HAP-1 (cell line): ENCODE measurements at regions of chr6 and their contacts with region 1.

Region 1: DNA sequence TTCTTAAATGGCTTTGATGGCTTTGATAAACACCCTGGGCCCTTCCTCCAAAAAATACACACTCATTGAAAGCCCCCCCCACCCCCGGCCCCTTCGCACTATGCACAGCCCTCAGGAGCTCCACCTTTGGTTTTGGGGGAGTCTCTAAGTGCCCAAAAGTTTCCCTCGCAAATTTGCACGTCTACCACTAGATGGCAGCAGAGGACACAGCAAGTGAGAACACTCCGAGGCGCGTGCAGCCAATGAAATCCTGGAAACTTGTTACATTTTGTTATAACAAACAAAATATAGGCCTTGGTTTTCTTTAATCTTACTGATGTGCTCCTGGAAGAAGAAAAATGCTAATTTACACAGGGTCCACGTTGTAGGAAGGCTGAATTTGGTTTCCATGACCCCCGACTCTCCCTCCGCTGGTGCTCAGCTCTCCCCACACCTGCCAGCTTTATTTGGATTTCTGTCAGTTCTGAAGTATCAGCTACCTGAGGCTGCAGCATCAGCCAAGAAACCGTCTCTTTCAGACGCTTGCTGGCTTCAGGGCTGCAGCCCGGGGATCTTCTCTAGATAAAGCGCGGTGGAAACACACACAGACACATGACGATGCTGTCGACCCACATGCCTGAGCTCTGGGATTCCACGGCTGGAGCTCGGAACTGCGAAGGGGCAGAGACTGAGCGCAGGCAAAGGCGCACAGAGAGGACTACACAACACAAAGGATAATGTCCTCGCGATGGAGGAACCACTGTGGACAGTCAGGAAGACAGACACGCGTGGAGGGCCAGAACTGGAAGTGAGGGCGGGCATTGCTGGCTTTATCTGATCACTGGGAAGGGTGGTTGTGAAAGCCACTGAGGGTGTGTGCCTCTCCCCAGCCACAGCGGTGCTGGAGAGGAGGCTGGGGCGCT is 148.4 kb upstream of the RPS6KA2 start:
- DNase-seq: peak; percentile 43 to 73
- H3K4me3 ChIP-seq: no peak overlapping the region
- H3K4me1 ChIP-seq: no peaks in the 10 kb centered on the region
- H3K27me3 ChIP-seq: no peaks in the 10 kb centered on the region

Region 2: DNA sequence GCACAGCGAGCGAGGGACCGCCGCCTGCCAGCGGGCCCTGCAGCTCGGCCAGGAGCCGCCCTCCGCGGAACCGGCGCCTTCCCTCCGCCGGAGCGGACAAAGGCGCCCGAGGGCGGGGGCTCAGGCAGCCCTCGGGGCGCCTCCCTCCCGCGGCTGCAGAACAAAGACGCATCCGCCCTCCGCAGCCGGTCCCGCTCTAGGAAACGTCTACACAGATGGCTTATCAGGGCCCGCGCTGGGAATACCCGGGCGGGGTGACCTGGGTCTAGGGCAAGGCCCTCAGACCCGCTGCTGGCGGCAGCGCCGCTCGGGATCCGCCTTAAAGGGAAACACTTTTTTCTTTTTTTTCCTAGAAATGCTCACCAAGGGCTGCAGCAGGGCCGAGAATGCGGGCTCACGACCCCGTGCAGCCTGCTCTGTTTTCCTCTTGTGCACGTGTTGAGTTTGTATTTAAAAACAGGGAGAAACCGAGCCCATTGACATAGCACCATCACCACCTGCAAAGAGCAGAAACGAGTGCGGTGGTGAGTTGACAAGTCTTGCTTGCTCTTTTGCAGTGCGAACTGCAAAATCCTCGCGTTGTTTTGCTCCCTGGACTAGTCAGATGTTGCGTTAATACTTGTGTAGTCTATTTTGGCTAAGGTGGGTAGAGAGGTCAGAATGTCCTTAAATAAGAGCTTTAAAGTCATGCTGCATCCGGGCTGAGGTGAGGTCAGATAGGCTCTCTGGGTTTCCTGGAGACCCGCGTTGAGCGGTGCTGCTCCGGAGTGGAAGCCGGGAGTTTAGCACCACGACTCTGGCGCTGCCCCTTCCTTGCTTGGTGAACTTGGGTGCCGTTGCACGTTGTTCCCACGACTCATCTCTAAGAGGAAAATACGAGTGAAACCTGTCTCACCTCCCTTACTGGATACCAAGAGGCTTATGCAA is 147.3 kb before region 1 on chr6:
- in situ Hi-C with region 1: no loop called
- DNase-seq: peak; percentile 44 to 81
- H3K4me3 ChIP-seq: peak overlapping the region; percentile 43
- H3K4me1 ChIP-seq: peaks cover 5% of the 10 kb centered on the region
- H3K27me3 ChIP-seq: no peaks in the 10 kb centered on the region

Region 3: GRCh38 chr6:167020206-167020605 is 244.8 kb after region 1 on chr6:
- in situ Hi-C with region 1: no loop called
- DNase-seq: no peak
- H3K4me3 ChIP-seq: no peak overlapping the region
- H3K4me1 ChIP-seq: no peaks in the 10 kb centered on the region
- H3K27me3 ChIP-seq: no peaks in the 10 kb centered on the region

Region 4: DNA sequence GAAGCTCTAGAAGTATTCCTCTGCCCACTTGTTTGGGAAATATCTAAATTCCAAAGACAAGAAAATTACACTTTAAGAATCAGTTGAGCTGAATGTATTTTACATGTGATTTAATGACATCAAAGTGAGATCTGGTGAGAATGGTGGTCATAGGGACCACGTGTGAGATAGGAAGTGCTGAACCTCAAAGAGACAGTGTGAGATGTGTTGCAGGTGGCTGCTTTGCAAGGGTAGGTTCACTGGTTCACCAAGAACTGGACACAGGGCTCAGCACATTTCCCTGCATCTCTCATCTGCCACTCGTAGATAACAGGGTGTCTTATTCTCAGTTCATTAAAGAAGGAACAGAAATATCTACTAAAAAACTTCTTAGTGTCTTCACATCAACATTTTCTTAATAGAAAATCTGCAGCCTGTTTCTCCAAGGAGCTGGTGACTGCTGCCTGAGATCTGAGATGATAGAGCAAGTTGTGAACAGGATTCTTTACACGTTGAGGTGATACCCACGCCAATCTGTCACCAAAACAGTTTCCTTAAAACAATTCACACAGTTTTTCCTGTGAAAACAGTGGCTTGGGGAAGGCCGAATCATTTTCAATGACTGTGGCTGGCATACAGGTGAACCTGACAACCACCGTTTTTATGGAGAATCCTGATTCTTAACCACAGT is 354.7 kb after region 1 on chr6:
- in situ Hi-C with region 1: loop called (anchors 10 kb)
- DNase-seq: no peak
- H3K4me3 ChIP-seq: no peak overlapping the region
- H3K4me1 ChIP-seq: no peaks in the 10 kb centered on the region
- H3K27me3 ChIP-seq: no peaks in the 10 kb centered on the region

Region 5: DNA sequence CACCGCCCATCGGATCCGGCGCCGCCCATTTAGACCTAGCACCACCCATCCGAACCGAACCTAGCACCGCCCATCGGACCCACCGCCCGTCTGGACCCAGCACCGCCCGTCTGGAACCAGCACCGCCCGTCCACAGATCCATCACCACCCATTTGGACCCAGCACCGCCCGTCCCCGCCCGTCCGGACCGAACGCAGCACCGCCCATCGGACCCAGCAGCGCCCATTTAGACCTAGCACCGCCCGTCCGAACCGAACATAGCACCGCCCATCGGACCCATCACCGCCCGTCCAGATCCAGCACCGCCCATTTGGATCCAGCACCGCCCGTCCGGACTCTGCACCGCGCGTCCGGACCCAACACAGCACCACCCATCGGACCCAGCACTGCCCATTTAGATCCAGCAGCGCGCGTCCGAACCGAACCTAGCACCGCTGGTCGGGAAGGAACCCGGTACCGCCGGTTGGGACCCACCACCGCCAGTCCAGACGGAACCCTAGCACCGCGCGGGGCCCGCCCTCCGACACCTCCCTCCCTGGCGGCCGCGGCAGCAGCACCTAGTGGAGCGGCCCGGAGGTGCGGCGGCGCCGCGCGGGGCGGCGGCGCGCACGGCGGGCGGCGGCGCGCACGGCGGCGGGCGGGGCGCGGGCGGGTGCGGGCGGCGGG is 1050.9 kb after region 1 on chr6:
- in situ Hi-C with region 1: no loop called
- DNase-seq: peak; percentile 59 to 79
- H3K4me3 ChIP-seq: peak overlapping the region; percentile 86
- H3K4me1 ChIP-seq: peaks cover 15% of the 10 kb centered on the region
- H3K27me3 ChIP-seq: no peaks in the 10 kb centered on the region